Adrenal gland (tissue), 19 donors: ENCODE measurements at regions of chr2 and their contacts with region 1.

Region 1: GRCh38 chr2:178914259-178914849 is 107.1 kb upstream of the TTN start:
- DNase-seq: peak; percentile 77 to 96 (median 89)
- H3K4me3 ChIP-seq: no peak overlapping the region
- H3K27ac ChIP-seq: no peak overlapping the region
- H3K4me1 ChIP-seq: no peaks in the 10 kb centered on the region
- H3K27me3 ChIP-seq: no peaks in the 10 kb centered on the region
- CTCF ChIP-seq: peak; percentile 72 to 85 (median 80)
- POLR2A ChIP-seq: no peak

Region 2: GRCh38 chr2:178796079-178796677 is 118.2 kb before region 1 on chr2:
- intact Hi-C with region 1: loop called (anchors 5 to 10 kb)
- DNase-seq: no peak
- H3K4me3 ChIP-seq: no peak overlapping the region
- H3K27ac ChIP-seq: no peak overlapping the region
- H3K4me1 ChIP-seq: no peaks in the 10 kb centered on the region
- H3K27me3 ChIP-seq: no peaks in the 10 kb centered on the region
- CTCF ChIP-seq: peak; percentile 52 to 87 (median 74)
- POLR2A ChIP-seq: no peak